AG04450 (cell line): ENCODE measurements at regions of chr4 and their contacts with region 1.

Region 1: DNA sequence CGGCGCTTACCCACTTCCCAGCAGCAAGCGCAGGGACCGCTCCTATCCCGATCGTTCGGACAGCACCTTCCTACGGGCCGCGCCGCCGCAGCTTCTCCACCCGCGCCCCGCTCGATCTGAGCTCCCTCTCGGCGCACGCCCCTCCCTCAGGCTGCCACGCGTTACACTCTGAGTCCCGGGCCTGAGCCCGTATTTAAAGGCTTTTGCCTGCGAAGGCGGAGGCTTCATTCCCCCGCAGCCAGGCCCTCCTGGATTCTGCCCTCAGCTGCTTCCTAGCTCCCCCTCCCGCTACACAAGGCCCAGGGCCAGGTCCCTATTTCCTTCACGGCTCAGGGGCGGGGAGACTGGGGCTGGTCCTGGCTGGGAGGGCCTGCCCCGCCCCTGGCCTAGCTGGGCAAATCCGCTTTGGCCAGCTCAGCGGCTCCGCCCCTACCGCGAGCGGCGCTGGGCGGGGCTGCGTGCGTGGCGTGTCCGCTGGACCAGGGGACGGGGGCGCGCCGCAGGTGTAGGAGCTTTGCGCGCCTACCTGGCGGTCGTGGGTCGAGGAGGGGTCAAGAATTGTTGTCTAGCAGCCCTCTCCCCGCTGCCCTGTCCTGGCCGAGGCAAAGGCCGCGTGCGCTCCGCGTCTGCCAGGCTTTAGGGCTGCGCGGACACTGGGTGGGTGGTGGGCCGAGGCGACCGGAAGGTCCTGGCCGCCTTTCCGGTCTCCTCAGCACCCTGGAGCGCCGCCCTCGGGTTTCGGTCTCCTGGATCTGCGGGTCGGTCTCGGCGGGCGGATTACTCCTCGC is at the start of gene UGDH:
- DNase-seq: peak; percentile 98
- H3K4me3 ChIP-seq: peak within 1 kb of the TSS; percentile 92
- H3K27ac ChIP-seq: peak within 1 kb of the TSS; percentile 97
- H3K27me3 ChIP-seq: no peaks in the 10 kb centered on the region
- CTCF ChIP-seq: no peak
- polyA plus RNA-seq, gene UGDH: 87.8 and 117 TPM in 2 replicates

Region 2: GRCh38 chr4:39357002-39357401 is 170.5 kb before region 1 on chr4:
- CTCF ChIA-PET with region 1: no interaction called
- POLR2A ChIA-PET with region 1: no interaction called
- DNase-seq: no peak
- H3K4me3 ChIP-seq: no peak overlapping the region
- H3K27ac ChIP-seq: no peak overlapping the region
- H3K27me3 ChIP-seq: no peaks in the 10 kb centered on the region
- CTCF ChIP-seq: no peak

Region 3: DNA sequence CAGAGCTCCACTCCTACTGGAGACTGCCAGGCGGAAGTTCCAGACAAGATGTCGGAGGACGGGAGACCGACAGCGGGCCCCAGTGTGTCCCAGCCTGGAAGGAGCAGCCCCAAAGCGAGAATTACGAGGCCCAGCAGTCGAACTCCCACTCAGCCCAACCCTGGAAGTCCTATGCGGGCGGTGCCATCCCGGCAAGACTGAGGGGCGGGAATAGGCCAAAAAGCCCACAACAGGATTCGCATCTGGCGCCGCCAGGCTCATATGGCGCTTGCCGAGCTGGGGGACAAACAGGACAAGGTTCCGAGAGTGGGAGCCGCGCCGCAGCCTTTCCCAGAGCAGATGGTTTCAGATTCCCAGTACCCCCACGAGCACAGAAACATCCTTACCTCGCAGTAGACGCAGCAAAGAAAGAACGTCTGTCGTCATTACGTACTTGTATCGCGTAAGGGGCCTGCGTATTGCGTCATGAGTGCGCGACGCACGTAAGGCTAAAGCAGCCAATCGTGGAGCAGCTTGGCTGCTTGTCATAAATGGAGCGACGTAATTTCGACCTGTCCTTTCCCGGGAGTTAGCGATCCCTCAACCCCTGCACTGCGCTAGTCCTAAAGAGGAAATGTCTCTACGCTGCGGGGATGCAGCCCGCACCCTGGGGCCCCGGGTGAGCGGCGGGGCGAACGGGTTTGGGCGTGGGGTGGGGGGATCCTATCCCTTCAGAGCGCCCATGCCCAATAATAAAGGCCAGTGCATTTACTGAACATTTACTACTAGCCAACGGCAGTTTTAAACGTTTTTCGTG is 68.8 kb before region 1 on chr4 and contains the starts of genes LIAS and RPL9:
- CTCF ChIA-PET with region 1: no interaction called
- POLR2A ChIA-PET with region 1: interaction called, 10 read pairs
- DNase-seq: peak; percentile 99
- H3K4me3 ChIP-seq: peak within 1 kb of the TSS; percentile 95
- H3K27ac ChIP-seq: peak within 1 kb of the TSS; percentile 94
- H3K27me3 ChIP-seq: no peaks in the 10 kb centered on the region
- CTCF ChIP-seq: no peak
- polyA plus RNA-seq, gene LIAS: 8.6 and 13.1 TPM in 2 replicates
- polyA plus RNA-seq, gene RPL9: 2,183 and 3,111 TPM in 2 replicates

Region 4: GRCh38 chr4:39548428-39548921 is 21.0 kb after region 1 on chr4:
- CTCF ChIA-PET with region 1: no interaction called
- POLR2A ChIA-PET with region 1: interaction called, 12 read pairs
- DNase-seq: no peak
- H3K4me3 ChIP-seq: no peak overlapping the region
- H3K27ac ChIP-seq: no peak overlapping the region
- H3K27me3 ChIP-seq: no peaks in the 10 kb centered on the region
- CTCF ChIP-seq: no peak

Region 5: DNA sequence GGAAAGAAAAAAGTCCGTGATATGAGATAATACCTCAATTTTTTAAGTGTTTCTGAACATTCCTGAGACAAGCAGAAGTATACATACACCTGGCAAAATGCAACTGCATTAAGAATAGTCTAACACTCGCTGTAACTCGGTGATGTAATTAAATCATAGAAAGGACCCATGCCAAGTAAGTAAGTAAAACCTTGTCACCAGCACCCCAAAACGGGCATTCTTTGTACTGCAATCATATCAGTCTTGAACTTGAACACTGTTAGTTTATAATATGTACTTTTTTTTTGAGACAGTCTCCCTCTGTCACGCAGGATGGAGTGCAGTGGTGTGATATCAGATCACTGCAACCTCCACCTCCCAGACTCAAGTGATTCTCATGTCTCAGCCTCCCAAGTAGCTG is 63.8 kb after region 1 on chr4:
- CTCF ChIA-PET with region 1: interaction called, 3 read pairs
- POLR2A ChIA-PET with region 1: interaction called, 10 read pairs
- DNase-seq: no peak
- H3K4me3 ChIP-seq: no peak overlapping the region
- H3K27ac ChIP-seq: no peak overlapping the region
- H3K27me3 ChIP-seq: no peaks in the 10 kb centered on the region
- CTCF ChIP-seq: peak; percentile 51

Region 6: DNA sequence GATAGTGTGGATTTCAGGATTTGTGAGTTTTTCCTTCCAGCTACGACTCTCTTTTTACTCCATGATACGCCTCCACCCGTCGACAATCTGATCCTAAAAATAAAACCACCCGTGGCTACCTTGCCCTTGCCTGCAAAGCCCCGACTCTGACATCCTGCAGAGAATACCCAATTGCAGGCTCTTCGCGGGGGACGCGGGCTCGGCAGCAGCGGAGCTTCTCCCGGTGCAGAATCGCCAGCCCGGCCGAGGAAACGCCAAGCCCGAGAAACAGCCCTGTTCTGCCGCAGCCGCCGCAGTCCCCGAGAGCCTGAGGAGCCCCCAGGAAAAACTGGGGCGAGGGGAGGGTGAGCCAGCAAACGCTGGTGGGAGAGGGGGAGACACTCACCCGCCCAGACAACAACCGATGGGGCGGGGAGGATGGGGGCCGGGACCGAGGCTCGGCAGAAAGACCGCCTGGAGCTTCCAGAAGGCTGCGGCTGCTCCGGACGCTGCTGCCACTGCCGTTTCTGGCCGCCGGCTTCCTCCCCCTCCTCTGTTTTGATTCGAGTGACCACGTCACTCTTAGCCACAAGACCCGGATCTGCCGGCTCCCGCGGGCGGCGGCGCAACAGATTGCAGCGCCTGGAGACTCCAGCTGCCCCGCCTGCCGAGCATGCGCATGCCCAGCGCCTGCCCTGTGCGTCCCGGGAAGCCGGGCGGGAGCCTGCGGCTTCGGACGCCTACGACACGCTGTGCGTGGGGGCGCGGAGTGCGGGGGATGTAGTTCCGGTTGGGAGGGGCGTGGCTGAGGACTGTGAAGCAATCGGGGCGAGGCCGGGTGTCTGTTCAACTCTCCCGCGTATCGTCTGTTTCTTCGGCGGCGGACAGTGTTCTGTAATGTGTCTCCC is 111.1 kb after region 1 on chr4 and contains the start of gene SMIM14:
- CTCF ChIA-PET with region 1: no interaction called
- POLR2A ChIA-PET with region 1: interaction called, 64 read pairs
- DNase-seq: peak; percentile 96
- H3K4me3 ChIP-seq: peak within 1 kb of the TSS; percentile 70
- H3K27ac ChIP-seq: peak within 1 kb of the TSS; percentile 93
- H3K27me3 ChIP-seq: no peaks in the 10 kb centered on the region
- CTCF ChIP-seq: no peak
- polyA plus RNA-seq, gene SMIM14: 48.0 and 53.7 TPM in 2 replicates

Region 7: DNA sequence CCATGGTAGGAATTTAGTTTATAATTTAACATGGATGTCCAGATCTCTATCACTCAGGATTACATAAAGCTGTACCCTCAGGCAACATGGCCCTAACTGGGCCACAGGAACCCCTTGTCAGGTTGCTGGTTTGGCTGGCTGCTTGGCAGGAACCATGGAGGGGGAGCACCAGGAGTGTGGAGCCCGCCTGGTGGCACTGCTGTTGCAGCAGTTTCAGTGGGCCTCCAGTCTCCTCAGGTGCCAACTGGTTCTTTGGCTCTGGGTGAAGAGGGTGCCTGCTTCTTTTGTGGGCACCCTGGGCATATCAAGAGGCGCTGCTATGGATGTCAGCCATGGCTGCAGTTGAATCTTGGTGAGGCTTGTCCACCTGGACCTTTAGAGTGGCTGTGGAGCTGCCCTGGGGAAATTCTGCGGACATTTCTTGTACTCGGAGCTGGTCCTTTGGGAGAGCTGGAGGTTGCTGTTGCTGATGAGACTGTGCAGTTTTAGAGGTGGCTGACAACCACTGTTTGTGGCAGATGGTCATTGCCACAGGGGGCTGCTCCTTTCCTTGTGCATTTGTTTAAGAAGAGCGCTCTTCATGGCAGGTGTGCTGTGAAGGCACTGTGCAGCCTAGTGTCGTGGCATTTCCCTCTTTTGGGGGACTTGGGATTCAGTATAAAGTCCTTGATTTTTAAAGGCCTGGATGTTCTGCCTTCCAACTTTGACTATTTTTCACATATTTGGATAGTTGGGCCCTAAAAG is 121.5 kb after region 1 on chr4:
- CTCF ChIA-PET with region 1: no interaction called
- POLR2A ChIA-PET with region 1: no interaction called
- DNase-seq: no peak
- H3K4me3 ChIP-seq: no peak overlapping the region
- H3K27ac ChIP-seq: no peak overlapping the region
- H3K27me3 ChIP-seq: no peaks in the 10 kb centered on the region
- CTCF ChIP-seq: no peak

Region 8: GRCh38 chr4:39947423-39947822 is 420.0 kb after region 1 on chr4:
- CTCF ChIA-PET with region 1: no interaction called
- POLR2A ChIA-PET with region 1: interaction called, 16 read pairs
- DNase-seq: no peak
- H3K4me3 ChIP-seq: no peak overlapping the region
- H3K27ac ChIP-seq: no peak overlapping the region
- H3K27me3 ChIP-seq: no peaks in the 10 kb centered on the region
- CTCF ChIP-seq: no peak